Lower lobe of right lung (tissue), 2 donors: ENCODE measurements at regions of chr17 and their contacts with region 1.

Region 1: DNA sequence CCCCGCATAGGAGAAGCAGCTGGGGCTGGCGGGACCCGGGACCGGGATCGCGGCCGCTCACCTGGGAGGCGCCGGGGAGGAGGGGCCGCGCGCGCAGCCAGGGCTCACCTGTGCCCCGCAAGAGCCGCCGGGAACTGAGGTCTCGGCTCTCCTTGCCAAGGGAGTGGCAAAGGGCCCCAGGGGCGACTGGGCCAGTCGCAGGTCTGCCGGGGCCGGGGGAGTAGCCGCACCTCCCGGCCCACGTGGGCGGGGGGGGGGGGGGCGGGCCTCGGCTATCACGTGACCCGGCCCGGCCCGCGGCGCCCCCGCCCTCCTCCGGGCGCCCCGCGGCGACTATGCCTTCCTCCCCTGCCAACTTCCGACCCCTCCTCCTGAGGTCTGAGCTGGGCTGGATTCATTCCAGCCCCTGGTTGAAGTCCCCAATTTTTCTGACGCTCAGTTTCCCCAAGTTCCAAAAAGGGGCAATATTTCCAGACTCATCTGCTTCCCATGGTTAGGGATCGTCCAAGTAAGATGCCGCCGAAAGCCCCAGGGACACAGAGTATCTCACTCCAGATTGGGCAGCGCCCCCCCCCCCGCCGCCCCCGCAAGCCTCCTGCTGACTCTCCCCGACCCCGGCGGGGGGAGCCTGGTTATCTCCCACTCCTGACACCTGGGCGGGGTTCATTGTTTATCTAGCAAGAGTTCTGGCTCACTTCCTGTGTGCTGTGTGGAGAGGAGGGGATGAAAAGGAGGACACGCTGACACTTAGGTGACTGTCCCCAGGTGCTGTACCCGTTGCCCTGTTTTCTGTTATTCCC is at the start of gene TMC6:
- DNase-seq: peak; percentile 85
- ATAC-seq: peak; percentile 79 to 81
- H3K4me3 ChIP-seq: peak within 1 kb of the TSS; percentile 94
- H3K27ac ChIP-seq: peak within 1 kb of the TSS; percentile 91
- H3K4me1 ChIP-seq: peaks cover 88% of the 10 kb centered on the region
- H3K27me3 ChIP-seq: no peaks in the 10 kb centered on the region
- CTCF ChIP-seq: no peak
- total RNA-seq, gene TMC6: 173 TPM

Region 2: DNA sequence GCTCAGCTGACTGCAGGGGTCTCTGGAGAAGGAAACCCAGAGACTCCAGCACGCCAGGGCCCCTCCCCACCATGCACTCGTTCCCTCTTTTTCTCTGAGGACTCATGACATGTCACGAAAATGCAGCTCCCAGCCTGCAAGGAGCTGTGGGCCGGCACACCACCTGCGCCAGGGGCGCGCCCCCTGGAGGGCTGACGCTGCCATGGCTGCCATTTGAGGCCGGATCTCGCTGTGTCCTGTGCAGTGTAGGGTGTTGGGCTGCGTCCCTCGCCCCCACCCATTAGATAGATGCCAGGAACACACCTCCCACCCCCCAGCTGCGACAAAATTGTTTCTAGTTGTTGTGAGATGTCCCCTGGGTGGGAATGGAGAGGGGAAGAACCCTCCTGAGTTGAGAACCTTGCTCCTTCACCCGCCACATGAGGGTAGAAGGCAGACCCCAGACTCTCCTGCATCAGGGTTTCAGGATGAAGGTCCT is 47.8 kb after region 1 on chr17:
- intact Hi-C with region 1: loop called (anchors 10 kb)
- DNase-seq: peak; percentile 90
- ATAC-seq: peak; percentile 31 to 50
- H3K4me3 ChIP-seq: no peak overlapping the region
- H3K27ac ChIP-seq: peak overlapping the region; percentile 85
- H3K4me1 ChIP-seq: peaks cover 80% of the 10 kb centered on the region
- H3K27me3 ChIP-seq: no peaks in the 10 kb centered on the region
- CTCF ChIP-seq: peak; percentile 94